OCI-LY7 (cell line): ENCODE measurements at regions of chr2 and their contacts with region 1.

Region 1: DNA sequence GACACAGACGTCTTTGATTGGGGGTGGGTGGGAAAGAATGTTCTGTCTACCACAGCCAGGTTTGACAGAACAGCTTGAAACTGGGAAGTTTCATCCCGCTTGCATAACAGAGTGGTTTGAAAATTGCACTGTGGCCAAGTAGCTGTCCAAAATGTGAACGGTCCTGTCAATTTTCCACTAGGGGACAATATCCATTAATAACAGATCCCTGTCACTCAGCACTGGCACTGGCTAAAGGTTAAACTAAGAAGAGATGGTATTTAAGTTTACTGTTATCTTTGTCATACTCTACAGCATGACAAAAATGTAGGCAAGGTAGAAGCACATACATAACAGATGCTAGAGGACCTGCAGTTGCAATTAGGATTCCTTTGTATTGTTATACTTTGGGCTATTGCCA is 55.6 kb upstream of the ACMSD start:
- DNase-seq: peak; percentile 52
- H3K4me3 ChIP-seq: no peak overlapping the region
- H3K27ac ChIP-seq: no peak overlapping the region
- H3K4me1 ChIP-seq: no peaks in the 10 kb centered on the region
- CTCF ChIP-seq: peak; percentile 77

Region 2: GRCh38 chr2:134460583-134460998 is 322.2 kb before region 1 on chr2:
- CTCF ChIA-PET with region 1: no interaction called
- POLR2A ChIA-PET with region 1: no interaction called
- intact Hi-C with region 1: loop called (anchors 10 kb)
- DNase-seq: peak; percentile 70
- H3K4me3 ChIP-seq: no peak overlapping the region
- H3K27ac ChIP-seq: no peak overlapping the region
- H3K4me1 ChIP-seq: no peaks in the 10 kb centered on the region
- CTCF ChIP-seq: peak; percentile 78

Region 3: DNA sequence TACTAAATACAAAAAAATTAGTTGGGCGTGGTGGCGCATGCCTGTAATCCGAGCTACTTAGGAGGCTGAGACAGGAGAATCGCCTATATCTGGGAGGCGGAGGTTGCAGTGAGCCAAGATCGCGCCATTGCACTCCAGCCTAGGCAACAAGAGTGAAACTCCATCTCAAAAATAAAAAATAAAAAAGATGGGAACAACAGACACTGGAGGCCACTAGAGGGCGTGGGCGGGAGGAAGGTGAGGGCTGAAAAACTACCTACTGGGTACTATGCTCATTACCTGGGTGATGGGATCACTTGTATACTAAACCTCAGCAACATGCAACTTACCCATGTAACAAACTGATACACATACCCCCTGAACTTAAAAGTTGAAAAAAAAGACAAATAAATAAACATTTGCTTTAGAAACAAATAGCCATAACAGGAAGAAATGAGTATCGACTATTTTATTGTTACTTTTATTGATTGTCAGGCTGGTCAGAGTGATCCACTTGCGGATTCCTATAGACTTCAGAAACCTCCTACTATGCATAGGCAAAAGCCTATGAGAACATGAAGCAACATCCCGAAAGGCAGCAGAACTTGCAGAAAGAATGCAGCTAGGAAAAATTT is 125.0 kb before region 1 on chr2:
- CTCF ChIA-PET with region 1: no interaction called
- POLR2A ChIA-PET with region 1: no interaction called
- intact Hi-C with region 1: loop called (anchors 2 kb)
- DNase-seq: peak; percentile 41
- H3K4me3 ChIP-seq: no peak overlapping the region
- H3K27ac ChIP-seq: no peak overlapping the region
- H3K4me1 ChIP-seq: no peaks in the 10 kb centered on the region
- CTCF ChIP-seq: peak; percentile 85

Region 4: DNA sequence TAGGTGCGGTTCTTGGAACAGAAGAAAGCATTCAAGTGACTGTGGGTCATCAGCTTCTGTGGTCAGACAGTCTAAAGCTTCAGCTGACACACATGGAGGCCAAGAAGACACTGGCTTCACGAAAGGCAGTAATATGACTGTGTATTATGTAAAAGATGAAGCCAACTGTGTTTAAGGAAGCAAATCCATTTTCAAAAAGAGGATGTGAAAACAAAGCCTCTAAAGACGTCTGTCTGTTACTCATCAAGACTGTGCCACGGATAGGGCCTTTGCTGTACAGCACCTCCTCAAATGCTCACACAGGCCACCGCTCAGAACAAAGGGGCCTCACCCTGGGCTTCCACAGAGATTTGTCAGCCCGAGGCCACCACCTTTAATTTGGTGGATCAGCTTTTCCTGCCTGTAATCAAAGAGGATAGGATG is 42.9 kb before region 1 on chr2:
- CTCF ChIA-PET with region 1: interaction called, 3 read pairs
- POLR2A ChIA-PET with region 1: interaction called, 3 read pairs
- intact Hi-C with region 1: loop called (anchors 5 kb)
- DNase-seq: peak; percentile 95
- H3K4me3 ChIP-seq: peak overlapping the region; percentile 46
- H3K27ac ChIP-seq: peak overlapping the region; percentile 93
- H3K4me1 ChIP-seq: peaks cover 63% of the 10 kb centered on the region
- CTCF ChIP-seq: no peak

Region 5: DNA sequence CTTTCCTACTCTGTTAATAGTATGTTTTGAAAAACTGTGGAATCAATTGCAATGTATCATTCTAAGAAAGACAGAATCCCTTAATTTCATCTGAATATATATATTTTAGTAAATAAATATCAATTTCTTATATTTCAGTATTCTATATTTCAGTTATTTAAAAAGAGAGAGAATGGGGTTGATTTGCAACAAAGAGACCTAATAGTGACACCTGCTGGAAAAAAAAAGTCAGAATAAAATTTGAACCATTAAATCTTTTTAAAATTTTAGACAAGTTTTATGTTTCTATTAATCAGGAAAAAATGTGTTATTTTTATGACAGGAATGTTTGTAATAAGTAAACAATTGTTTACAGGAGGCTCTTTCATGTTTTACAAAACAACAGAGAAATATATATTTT is 115.1 kb after region 1 on chr2:
- CTCF ChIA-PET with region 1: no interaction called
- POLR2A ChIA-PET with region 1: no interaction called
- intact Hi-C with region 1: loop called (anchors 5 kb)
- DNase-seq: peak; percentile 26
- H3K4me3 ChIP-seq: no peak overlapping the region
- H3K27ac ChIP-seq: no peak overlapping the region
- H3K4me1 ChIP-seq: no peaks in the 10 kb centered on the region
- CTCF ChIP-seq: peak; percentile 80